Naive thymus-derived CD4-positive, alpha-beta T cell (primary cell): ENCODE measurements at regions of chr11 and their contacts with region 1.

Region 1: GRCh38 chr11:118956094-118956846 is at the start of gene UPK2:
- DNase-seq: peak; percentile 74 to 91 (median 83)
- ATAC-seq: peak; percentile 99
- H3K4me3 ChIP-seq: no peak within 1 kb of the TSS
- H3K4me3 Mint-ChIP-seq: peak within 1 kb of the TSS in 1 of 10 donors; percentile 49
- H3K27ac ChIP-seq: no peak within 1 kb of the TSS
- H3K27ac Mint-ChIP-seq: peak within 1 kb of the TSS in 8 of 9 donors; percentile 2 to 77 (median 54)
- H3K4me1 ChIP-seq: no peaks in the 10 kb centered on the region
- H3K4me1 Mint-ChIP-seq: peaks cover 0 to 11% (median 5%) of the 10 kb centered on the region in 7 donors
- H3K27me3 ChIP-seq: no peaks in the 10 kb centered on the region
- H3K27me3 Mint-ChIP-seq: peaks cover 0 to 31% (median 0%) of the 10 kb centered on the region in 5 donors
- total RNA-seq, gene UPK2: 0.24 TPM in 1 of 5 experiments, not detected in the others

Region 2: DNA sequence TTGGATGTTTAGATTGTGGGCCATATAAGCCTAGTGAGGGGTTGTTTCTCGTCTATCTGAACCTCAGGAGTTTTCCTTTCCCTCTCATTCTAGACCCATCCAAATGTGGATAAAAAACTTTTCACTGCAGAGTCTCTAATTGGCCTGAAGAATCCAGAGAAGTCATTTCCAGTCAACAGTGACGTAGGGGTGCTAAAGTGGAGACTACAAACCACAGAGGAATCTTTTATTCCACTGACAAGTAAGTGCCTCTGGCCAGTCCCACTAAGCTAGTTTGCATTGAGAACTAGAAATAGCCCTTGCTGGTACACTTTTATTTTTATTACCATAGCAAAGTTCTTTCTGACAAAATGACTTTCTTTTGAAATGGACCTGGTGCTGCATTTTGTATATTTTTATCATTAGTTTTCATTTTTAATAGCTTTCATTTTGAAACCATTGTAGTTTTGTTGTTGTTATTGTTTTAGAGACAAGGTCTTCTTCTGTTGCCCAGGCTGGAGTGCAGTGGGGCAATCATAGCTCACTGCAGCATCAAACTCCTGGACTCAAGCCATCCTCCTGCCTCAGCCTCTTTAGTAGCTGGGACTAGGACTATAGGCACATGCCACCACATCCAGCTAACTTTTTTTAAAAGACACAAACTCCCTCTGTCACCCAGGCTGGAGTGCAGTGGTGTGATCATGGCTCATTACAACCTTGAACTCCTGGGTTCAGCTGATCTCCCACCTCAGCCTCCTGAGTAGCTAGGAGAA is 363.5 kb before region 1 on chr11:
- CTCF ChIA-PET with region 1: interaction called, 3 read pairs
- POLR2A ChIA-PET with region 1: no interaction called
- intact Hi-C with region 1: loop called (anchors 1 kb)
- DNase-seq: no peak
- ATAC-seq: no peak
- H3K4me3 ChIP-seq: no peak overlapping the region
- H3K4me3 Mint-ChIP-seq: no peak overlapping the region
- H3K27ac ChIP-seq: no peak overlapping the region
- H3K27ac Mint-ChIP-seq: peak overlapping the region in 1 of 9 donors; percentile 25
- H3K4me1 ChIP-seq: peaks cover 0 to 10% of the 10 kb centered on the region in 2 donors
- H3K4me1 Mint-ChIP-seq: peaks cover 5 to 22% (median 16%) of the 10 kb centered on the region in 7 donors
- H3K27me3 ChIP-seq: no peaks in the 10 kb centered on the region
- H3K27me3 Mint-ChIP-seq: no peaks in the 10 kb centered on the region

Region 3: GRCh38 chr11:118659314-118659952 is 296.8 kb before region 1 on chr11:
- CTCF ChIA-PET with region 1: interaction called, 3 read pairs
- POLR2A ChIA-PET with region 1: no interaction called
- intact Hi-C with region 1: loop called (anchors 1 kb)
- DNase-seq: peak; percentile 75 to 88 (median 84)
- ATAC-seq: peak; percentile 99
- H3K4me3 ChIP-seq: no peak overlapping the region
- H3K4me3 Mint-ChIP-seq: peak overlapping the region in 2 of 10 donors; percentile 56 to 64
- H3K27ac ChIP-seq: no peak overlapping the region
- H3K27ac Mint-ChIP-seq: peak overlapping the region in 1 of 9 donors; percentile 1
- H3K4me1 ChIP-seq: peaks cover 0 to 7% of the 10 kb centered on the region in 2 donors
- H3K4me1 Mint-ChIP-seq: peaks cover 0 to 12% (median 6%) of the 10 kb centered on the region in 7 donors
- H3K27me3 ChIP-seq: no peaks in the 10 kb centered on the region
- H3K27me3 Mint-ChIP-seq: no peaks in the 10 kb centered on the region

Region 4: DNA sequence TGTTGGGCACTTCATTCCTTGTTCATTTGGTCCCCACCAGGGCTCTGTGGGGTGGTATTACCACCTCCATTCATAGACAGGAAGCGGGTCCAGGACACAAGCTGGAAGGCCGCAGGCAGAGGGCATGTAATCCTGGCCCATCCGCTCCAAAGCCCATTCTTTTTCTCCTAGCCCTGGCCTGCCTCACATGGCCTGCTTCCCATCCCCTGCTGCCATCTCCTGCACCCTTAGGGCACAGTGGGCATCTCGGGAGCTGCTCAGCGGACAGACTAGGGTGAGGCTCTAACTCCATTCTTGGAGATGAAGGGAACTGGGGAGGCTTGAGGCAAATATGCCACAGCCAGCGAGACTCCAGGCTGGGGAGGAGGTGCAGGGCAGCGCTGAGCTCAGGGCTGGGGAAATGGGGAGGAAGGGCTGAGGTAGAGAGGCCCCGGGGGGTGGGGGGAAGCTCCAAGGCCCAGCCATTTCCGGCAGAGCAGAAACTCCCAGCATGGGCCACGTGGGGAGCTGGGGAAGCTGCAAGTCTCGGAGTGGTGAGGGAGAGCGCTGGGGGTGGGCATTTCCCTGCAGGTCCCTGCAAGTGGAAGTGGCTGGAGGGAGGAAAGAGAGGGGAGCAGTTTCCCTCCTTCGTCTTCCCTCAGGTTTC is 16.2 kb before region 1 on chr11:
- CTCF ChIA-PET with region 1: interaction called, 9 read pairs
- POLR2A ChIA-PET with region 1: interaction called, 5 read pairs
- intact Hi-C with region 1: loop called in 1 of 2 experiments (anchors 2 kb)
- DNase-seq: peak in 6 of 9 donors; percentile 53 to 70 (median 58)
- ATAC-seq: peak; percentile 86
- H3K4me3 ChIP-seq: peak overlapping the region; percentile 38
- H3K4me3 Mint-ChIP-seq: peak overlapping the region in 9 of 10 donors; percentile 33 to 74 (median 66)
- H3K27ac ChIP-seq: peak overlapping the region; percentile 34
- H3K27ac Mint-ChIP-seq: peak overlapping the region in 8 of 9 donors; percentile 56 to 82 (median 76)
- H3K4me1 ChIP-seq: peaks cover 12 to 24% of the 10 kb centered on the region in 2 donors
- H3K4me1 Mint-ChIP-seq: peaks cover 31 to 60% (median 54%) of the 10 kb centered on the region in 7 donors
- H3K27me3 ChIP-seq: no peaks in the 10 kb centered on the region
- H3K27me3 Mint-ChIP-seq: peaks cover 0 to 4% (median 0%) of the 10 kb centered on the region in 5 donors

Region 5: DNA sequence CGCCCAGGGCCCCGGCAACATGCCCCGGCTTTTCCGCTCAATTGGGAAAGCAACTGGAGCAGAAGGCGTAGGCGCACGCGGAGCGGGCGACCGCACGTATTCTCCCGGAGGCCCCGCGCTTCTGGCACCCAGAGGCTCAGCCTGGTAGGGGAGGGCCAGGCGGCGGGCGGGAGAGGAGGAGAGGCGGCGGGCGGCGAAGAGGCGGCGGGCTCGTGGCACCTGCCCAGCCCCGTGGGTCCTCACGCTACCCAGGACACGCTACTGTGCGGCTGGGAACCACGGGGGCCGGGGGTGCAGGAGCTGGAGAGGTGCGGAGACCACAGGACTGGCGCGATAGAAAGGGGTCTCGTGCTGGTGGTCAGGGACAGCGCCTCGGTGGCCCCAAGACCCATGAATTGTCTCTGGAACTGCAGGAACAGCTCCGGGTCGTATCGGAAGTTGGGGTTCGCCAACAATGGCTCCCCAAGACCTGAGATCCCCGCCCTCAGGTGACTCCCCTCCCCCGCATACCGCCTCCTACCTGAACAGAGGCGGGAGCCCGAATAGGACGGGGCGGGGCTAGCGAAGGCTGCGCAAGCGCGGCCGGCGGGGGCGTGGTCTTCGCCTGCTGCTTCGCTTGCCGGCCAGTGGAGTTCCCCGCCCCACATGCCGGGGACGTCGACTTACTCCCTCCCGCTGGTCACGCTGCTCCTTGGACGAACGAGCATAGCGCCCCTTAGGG is 74.2 kb after region 1 on chr11 and contains the start of gene SLC37A4:
- CTCF ChIA-PET with region 1: no interaction called
- POLR2A ChIA-PET with region 1: no interaction called
- intact Hi-C with region 1: loop called in 1 of 2 experiments (anchors 2 kb)
- DNase-seq: peak; percentile 96 to 100 (median 98)
- ATAC-seq: peak; percentile 97
- H3K4me3 ChIP-seq: peak within 1 kb of the TSS; percentile 91
- H3K4me3 Mint-ChIP-seq: peak within 1 kb of the TSS; percentile 62 to 93 (median 82)
- H3K27ac ChIP-seq: peak within 1 kb of the TSS; percentile 79
- H3K27ac Mint-ChIP-seq: peak within 1 kb of the TSS; percentile 59 to 93 (median 81)
- H3K4me1 ChIP-seq: peaks cover 0 to 10% of the 10 kb centered on the region in 2 donors
- H3K4me1 Mint-ChIP-seq: peaks cover 12 to 24% (median 17%) of the 10 kb centered on the region in 7 donors
- H3K27me3 ChIP-seq: no peaks in the 10 kb centered on the region
- H3K27me3 Mint-ChIP-seq: no peaks in the 10 kb centered on the region
- total RNA-seq, gene SLC37A4: 7.1 to 20.8 (median 14.6) TPM